Endothelial cell of umbilical vein (primary cell): ENCODE measurements at regions of chr10 and their contacts with region 1.

Region 1: GRCh38 chr10:81127931-81128330 is 590.2 kb downstream of the SH2D4B start:
- DNase-seq: no peak
- H3K4me3 ChIP-seq: no peak overlapping the region
- H3K27ac ChIP-seq: no peak overlapping the region
- H3K4me1 ChIP-seq: no peaks in the 10 kb centered on the region
- H3K27me3 ChIP-seq: no peaks in the 10 kb centered on the region
- CTCF ChIP-seq: no peak
- POLR2A ChIP-seq: no peak

Region 2: GRCh38 chr10:80493522-80494051 is 634.3 kb before region 1 on chr10:
- CTCF ChIA-PET with region 1: no interaction called
- POLR2A ChIA-PET with region 1: no interaction called
- dilution Hi-C with region 1: no loop called
- intact Hi-C with region 1: no loop called
- DNase-seq: no peak
- H3K4me3 ChIP-seq: no peak overlapping the region
- H3K27ac ChIP-seq: peak overlapping the region; percentile 13
- H3K4me1 ChIP-seq: peaks cover 72% of the 10 kb centered on the region
- H3K27me3 ChIP-seq: no peaks in the 10 kb centered on the region
- CTCF ChIP-seq: no peak
- POLR2A ChIP-seq: no peak

Region 3: GRCh38 chr10:81104494-81104893 is 23.4 kb before region 1 on chr10:
- CTCF ChIA-PET with region 1: no interaction called
- POLR2A ChIA-PET with region 1: no interaction called
- dilution Hi-C with region 1: no loop called
- intact Hi-C with region 1: loop called (anchors 1 kb)
- DNase-seq: no peak
- H3K4me3 ChIP-seq: no peak overlapping the region
- H3K27ac ChIP-seq: no peak overlapping the region
- H3K4me1 ChIP-seq: no peaks in the 10 kb centered on the region
- H3K27me3 ChIP-seq: no peaks in the 10 kb centered on the region
- CTCF ChIP-seq: no peak
- POLR2A ChIP-seq: no peak